Caco-2 (cell line): ENCODE measurements at regions of chr19 and their contacts with region 1.

Region 1: GRCh38 chr19:47573071-47574026 is at the start of gene ZNF541:
- DNase-seq: no peak
- H3K4me3 ChIP-seq: no peak within 1 kb of the TSS
- H3K4me3 Mint-ChIP-seq: no peak within 1 kb of the TSS
- H3K27ac Mint-ChIP-seq: no peak within 1 kb of the TSS
- H3K4me1 ChIP-seq: no peaks in the 10 kb centered on the region
- H3K4me1 Mint-ChIP-seq: no peaks in the 10 kb centered on the region
- H3K27me3 ChIP-seq: no peaks in the 10 kb centered on the region
- H3K27me3 Mint-ChIP-seq: no peaks in the 10 kb centered on the region
- CTCF ChIP-seq: no peak
- total RNA-seq, gene ZNF541: not detected in 2 replicates

Region 2: DNA sequence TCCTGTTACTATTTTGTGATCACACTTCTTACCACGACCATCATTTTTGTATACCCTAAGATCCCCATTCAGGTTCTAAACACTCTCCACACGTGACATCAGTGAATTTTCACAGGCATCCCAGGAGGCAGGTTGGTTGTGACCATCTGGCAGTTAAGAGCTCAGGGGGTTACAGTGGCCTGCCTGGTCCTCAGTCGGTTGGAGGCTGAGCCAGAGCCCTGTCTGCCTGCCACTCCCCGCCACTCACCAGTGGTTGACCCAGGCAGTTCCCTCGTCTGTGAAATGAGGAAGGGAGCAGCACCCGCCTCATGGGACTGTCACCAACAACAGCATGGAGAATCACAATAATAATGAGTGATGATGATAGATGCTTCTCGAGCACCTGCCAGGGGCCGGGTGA is 103.5 kb after region 1 on chr19:
- CTCF ChIA-PET with region 1: interaction called, 11 read pairs
- POLR2A ChIA-PET with region 1: no interaction called
- intact Hi-C with region 1: no loop called
- DNase-seq: no peak
- H3K4me3 ChIP-seq: no peak overlapping the region
- H3K4me3 Mint-ChIP-seq: no peak overlapping the region
- H3K27ac Mint-ChIP-seq: no peak overlapping the region
- H3K4me1 ChIP-seq: no peaks in the 10 kb centered on the region
- H3K4me1 Mint-ChIP-seq: peaks cover 13% of the 10 kb centered on the region
- H3K27me3 ChIP-seq: no peaks in the 10 kb centered on the region
- H3K27me3 Mint-ChIP-seq: no peaks in the 10 kb centered on the region
- CTCF ChIP-seq: no peak